ENCODE measurements at regions of chr6 and their contacts with region 1.

Region 1: DNA sequence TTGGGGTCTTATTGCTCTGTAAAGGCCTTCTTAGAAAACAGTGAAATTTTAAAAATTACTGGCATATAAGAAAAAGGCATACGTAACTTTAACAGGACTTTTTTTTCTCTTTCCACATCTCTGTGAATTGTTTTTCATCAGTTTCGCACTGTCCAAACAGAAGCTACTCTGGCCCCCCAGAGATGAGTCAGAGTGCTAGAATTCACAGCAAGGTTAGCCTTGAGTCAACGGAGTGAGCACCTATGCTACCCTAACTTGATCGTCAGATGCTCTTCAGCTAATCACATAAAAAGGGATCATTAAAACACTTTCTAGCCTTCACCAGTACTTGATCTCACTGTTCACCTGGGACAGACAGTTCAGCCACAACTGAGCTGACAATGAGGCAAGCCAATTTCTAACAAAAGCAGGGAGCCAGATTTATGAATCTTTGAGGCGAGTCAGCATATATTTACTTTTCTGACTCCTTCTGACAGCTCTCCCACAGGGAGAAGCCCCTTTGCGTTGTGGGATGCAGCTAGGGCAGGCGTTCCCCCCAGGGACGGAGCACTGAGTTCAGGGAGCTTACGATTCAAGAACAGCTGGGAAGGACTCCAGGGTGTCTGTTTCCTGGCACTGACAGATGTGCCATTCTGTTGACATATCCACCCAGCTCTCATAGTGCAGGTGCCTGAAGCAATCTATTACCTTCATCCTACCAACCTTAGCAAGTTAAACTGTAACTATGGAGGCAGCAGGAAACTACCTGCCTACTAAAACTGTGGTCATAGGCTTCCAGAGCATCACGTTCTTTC is 46.4 kb upstream of the SPDEF start:
- DNase-seq: no peak
- ATAC-seq: peak; percentile 26

Region 2: DNA sequence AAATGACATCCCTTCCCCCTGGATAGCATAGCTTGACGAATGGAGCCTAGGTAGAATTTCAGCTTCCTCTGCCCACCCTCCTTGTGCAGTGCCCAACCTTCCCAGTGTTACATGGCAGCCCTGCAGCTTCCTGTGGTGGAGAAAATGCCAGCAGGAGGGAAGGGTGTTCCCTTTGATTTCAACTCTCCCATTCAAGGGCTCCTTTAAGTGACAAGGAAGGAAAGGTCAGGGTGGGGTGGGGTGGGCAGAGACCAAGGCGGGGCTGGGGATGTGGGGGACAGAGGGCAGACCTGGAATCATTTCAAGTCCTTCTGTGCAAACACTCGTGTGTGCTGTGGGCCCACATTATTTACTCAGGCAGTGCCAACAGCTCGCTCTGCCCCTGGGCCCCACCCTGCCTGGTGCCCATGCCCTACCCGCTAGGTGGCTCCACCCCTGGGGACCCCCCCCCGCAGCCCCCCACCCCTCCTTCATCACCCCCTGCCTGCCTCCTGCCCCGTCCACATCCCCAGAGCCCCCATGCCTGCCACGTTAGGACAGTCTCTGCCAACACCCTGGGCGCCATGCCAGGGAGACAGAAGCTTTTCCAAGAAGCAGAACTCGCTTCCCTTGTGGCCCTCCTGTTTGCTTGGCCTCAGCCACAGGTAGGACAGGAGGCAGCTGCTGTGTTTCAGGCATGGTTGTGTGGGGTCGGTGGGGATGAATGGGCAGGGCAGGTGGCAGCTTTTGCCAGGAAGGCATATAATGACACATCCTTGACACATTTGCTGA is 55.8 kb before region 1 on chr6:
- intact Hi-C with region 1: loop called (anchors 5 kb)
- DNase-seq: no peak
- ATAC-seq: peak; percentile 32